Endothelial cell of umbilical vein (primary cell): ENCODE measurements at regions of chr15 and their contacts with region 1.

Region 1: DNA sequence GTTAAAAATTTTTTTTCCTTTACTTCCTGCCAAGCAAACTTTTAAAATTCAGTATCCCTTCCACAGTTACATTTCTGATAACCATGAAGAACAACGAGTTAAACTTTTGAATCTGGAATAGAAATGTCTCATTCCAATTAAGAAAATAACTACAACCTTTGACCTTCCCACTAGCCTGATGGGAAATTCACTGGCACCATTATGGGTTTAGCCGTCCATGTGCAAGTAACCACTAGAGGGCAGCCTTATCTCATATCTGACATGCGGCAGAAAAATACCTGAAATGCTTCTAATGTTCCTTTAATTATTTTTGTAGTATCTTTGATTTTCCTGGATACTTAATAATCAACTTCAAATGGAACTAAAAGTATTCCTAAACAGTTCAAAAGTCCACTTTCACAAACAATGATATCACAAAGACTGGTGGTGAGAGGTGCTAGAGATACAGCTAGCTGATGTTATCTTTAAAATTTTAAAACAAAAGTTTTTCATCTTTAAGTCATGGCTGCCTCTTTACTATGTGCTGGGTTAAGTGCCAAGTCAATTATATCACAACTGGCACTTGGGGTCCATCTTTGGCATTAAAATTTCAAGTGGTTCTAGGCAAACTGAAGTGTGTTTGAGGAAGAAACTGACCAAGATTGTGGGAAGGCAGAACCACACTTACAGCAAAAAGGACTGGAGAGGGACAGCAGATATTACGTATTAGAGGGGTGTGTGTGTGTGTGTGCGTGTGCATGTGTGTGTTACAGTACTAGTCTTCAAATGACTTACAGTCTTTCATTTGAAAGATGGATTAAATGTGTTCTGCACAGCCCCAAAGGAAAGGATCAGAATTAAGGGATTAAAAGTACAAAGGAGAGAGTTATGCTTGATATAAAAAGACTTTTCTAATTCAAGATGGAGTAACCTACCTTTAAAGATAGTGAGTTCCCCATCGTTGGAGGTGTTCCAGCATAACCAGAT is 107.1 kb upstream of the ICE2 start:
- DNase-seq: peak; percentile 80
- H3K4me3 ChIP-seq: no peak overlapping the region
- H3K27ac ChIP-seq: no peak overlapping the region
- H3K4me1 ChIP-seq: peaks cover 25% of the 10 kb centered on the region
- H3K27me3 ChIP-seq: no peaks in the 10 kb centered on the region
- CTCF ChIP-seq: peak; percentile 68 to 75
- POLR2A ChIP-seq: no peak

Region 2: GRCh38 chr15:60718661-60719069 is 132.6 kb after region 1 on chr15:
- CTCF ChIA-PET with region 1: no interaction called
- POLR2A ChIA-PET with region 1: no interaction called
- dilution Hi-C with region 1: no loop called
- intact Hi-C with region 1: no loop called
- DNase-seq: peak; percentile 37
- H3K4me3 ChIP-seq: no peak overlapping the region
- H3K27ac ChIP-seq: no peak overlapping the region
- H3K4me1 ChIP-seq: peaks cover 7% of the 10 kb centered on the region
- H3K27me3 ChIP-seq: no peaks in the 10 kb centered on the region
- CTCF ChIP-seq: no peak
- POLR2A ChIP-seq: no peak

Region 3: DNA sequence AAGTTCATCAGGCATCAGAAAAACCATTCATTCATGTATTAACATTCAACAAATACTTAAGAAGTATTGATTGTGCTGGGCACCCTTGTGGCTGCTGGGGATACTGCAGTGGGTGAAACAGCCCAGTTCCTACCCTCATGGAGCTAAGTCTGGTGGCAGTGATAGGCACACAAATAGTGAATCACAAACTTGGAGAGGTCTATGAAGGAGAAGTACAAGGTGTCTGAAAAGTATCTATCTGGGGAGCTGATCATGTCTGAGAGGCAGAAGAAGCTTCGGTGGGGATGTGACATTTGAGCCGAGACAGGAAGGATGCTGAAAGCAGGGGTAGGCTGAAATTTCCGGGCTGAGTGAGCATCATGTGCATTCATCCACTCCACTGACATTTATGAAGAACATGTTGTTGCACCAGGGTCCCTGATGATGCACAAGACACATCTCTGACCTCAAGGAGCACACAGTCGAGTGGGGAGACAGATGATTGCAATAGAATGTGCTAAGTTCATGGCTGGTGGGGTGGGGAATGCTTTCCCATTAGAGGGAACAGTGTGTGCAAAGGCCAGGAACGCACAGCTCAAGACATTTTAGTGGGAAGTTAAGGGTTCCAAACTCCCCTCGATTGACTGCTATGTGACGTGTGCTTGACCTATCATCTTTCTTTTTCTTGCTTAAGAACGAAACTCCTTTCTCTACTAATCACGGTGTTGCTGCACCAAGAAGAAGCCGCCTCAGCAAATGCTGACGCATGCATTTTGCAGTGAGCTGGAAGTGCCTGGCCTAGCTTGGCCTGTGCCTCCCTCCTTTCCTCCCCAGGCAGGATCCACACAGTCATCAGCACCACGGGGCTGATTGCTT is 202.0 kb after region 1 on chr15:
- CTCF ChIA-PET with region 1: interaction called, 10 read pairs
- POLR2A ChIA-PET with region 1: no interaction called
- dilution Hi-C with region 1: no loop called
- intact Hi-C with region 1: loop called (anchors 2 kb)
- DNase-seq: peak; percentile 31
- H3K4me3 ChIP-seq: no peak overlapping the region
- H3K27ac ChIP-seq: no peak overlapping the region
- H3K4me1 ChIP-seq: no peaks in the 10 kb centered on the region
- H3K27me3 ChIP-seq: no peaks in the 10 kb centered on the region
- CTCF ChIP-seq: peak; percentile 38 to 39
- POLR2A ChIP-seq: no peak

Region 4: DNA sequence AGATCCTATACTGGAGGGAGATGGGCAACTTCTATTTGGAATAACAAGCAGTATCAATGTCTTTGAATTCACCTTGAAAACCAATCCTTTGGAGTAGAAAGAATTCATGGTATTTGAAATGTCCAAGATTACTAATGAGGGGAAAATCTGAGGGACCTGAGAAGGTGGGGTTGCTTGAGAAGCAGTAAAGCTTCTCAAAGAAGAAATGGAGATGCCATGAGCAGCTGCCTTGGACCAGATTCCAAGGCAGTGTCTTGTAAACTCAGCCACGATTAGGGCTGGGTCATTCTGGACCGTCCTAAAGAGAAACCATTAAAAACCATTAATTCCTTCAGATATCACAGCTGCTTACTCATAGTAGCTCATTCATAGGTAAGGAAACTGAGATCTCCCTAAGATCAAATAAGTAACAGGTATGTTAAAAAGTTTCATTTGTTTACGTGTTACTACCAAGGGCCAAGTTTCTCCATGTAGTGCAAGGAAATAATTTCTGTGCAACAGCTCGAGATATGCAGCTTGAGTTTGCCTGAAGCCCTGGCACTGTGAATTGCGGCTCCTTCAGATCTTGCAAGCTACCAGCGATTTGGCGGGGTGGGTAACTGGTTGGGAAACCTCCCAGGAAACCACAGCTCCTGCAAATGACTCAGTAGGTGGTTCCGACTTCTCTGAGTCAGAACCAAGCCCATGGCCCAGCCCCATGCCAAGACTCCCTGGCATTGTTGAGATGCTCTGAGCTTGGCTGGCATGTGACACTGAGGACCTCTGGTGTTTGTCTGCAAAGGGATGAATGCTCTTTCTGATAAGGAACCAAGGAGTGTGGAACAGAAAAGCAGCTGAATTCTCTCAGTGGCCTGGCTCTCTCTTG is 346.3 kb after region 1 on chr15:
- CTCF ChIA-PET with region 1: interaction called, 26 read pairs
- POLR2A ChIA-PET with region 1: no interaction called
- dilution Hi-C with region 1: no loop called
- intact Hi-C with region 1: no loop called
- DNase-seq: no peak
- H3K4me3 ChIP-seq: no peak overlapping the region
- H3K27ac ChIP-seq: no peak overlapping the region
- H3K4me1 ChIP-seq: no peaks in the 10 kb centered on the region
- H3K27me3 ChIP-seq: peaks cover 0 to 3% of the 10 kb centered on the region in 2 experiments
- CTCF ChIP-seq: no peak
- POLR2A ChIP-seq: no peak

Region 5: DNA sequence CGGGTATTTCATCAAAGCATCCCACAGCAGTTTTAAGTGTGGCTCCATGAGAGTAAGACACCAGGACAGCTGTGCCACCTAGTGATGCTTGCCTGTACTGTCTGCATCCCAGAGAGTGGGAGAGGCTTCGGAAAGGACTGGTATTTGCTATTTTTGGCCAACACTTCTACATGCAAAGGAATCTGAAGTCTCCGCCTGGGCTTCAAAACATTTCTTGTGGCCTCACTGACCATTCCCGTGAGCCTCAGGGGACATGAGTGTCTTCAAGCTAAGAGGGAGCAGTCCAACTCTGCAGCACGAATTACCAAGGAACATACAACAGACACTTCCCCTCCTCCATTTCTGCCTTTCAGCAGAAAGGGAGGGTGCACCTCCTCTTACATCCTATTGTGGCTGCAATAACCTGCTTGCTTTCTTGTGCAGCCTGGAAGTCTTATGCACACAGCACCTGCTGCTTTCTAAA is 465.6 kb after region 1 on chr15:
- CTCF ChIA-PET with region 1: interaction called, 61 read pairs
- POLR2A ChIA-PET with region 1: no interaction called
- dilution Hi-C with region 1: no loop called
- intact Hi-C with region 1: loop called (anchors 1 kb)
- DNase-seq: peak; percentile 70
- H3K4me3 ChIP-seq: no peak overlapping the region
- H3K27ac ChIP-seq: no peak overlapping the region
- H3K4me1 ChIP-seq: no peaks in the 10 kb centered on the region
- H3K27me3 ChIP-seq: no peaks in the 10 kb centered on the region
- CTCF ChIP-seq: peak; percentile 68 to 78
- POLR2A ChIP-seq: no peak

Region 6: GRCh38 chr15:61621146-61621545 is 1035.1 kb after region 1 on chr15:
- CTCF ChIA-PET with region 1: interaction called, 6 read pairs
- POLR2A ChIA-PET with region 1: no interaction called
- dilution Hi-C with region 1: no loop called
- intact Hi-C with region 1: loop called (anchors 2 kb)
- DNase-seq: peak; percentile 21
- H3K4me3 ChIP-seq: no peak overlapping the region
- H3K27ac ChIP-seq: no peak overlapping the region
- H3K4me1 ChIP-seq: no peaks in the 10 kb centered on the region
- H3K27me3 ChIP-seq: no peaks in the 10 kb centered on the region
- CTCF ChIP-seq: peak; percentile 39 to 69
- POLR2A ChIP-seq: no peak